ENCODE measurements at regions of chr1 and their contacts with region 1.

Region 1: DNA sequence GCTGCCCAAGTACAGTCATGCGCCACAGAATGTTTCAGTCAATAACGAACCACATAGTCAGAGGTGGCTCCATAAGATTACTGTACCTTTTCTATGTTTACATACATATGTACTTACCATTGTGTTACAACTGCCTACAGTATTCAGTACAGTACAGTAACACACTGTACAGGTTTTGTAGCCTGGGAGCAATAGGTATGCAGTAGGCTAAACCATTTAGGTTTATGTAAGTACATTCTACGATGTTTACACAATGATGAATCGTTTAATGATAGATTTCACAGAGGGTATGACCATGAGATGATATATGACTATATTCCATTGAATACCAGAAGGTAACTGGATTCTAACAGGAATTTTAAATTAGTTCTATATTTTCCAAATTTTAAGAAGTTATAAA is 10.5 kb downstream of the YY1AP1 start:
- DNase-seq: no peak
- ATAC-seq: no peak
- H3K4me3 ChIP-seq: no peak overlapping the region
- H3K27ac ChIP-seq: no peak overlapping the region
- H3K4me1 ChIP-seq: peaks cover 0 to 33% (median 19%) of the 10 kb centered on the region in 9 donors
- H3K27me3 ChIP-seq: no peaks in the 10 kb centered on the region
- CTCF ChIP-seq: no peak

Region 2: DNA sequence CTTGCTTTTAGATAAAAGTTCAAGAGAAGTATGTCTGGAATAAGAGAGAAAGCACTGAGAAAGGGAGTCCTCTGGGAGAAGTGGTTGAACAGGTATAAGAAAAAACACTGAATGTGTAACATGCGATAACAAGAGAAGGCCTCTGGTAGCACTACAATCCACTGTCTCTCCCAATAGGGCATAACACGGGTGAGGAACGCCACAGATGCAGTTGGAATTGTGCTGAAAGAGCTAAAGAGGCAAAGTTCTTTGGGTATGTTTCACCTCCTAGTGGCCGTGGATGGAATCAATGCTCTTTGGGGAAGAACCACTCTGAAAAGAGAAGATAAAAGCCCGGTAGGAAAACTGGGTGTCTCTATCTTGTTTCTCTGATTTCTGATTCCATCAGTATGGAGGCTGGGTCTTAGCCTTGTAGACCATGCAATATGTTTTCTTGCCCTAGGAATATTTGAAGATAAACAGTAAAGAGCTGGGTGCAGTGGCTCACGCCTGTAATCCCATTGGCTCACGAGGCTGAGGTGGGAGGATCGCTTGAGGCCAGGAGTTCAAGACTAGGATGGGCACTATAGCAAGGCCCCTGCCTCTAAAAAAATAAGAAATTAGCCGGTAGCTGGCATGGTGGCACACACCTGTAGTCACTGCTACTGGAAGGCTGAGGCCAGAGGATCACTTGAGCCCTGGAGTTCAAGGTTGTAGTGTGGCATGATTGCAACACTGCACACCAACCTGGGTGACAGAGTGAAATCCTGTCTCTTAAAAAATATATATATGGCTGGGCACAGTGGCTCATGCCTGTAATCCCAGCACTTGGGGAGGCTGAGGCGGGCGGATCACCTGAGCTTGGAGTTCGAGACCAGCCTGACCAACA is 51.2 kb after region 1 on chr1:
- intact Hi-C with region 1: loop called in 3 of 10 experiments (anchors 10 kb)
- DNase-seq: peak in 1 of 2 donors; percentile 43
- ATAC-seq: peak in 6 of 8 donors; percentile 50 to 64 (median 56)
- H3K4me3 ChIP-seq: no peak overlapping the region
- H3K27ac ChIP-seq: no peak overlapping the region
- H3K4me1 ChIP-seq: no peaks in the 10 kb centered on the region
- H3K27me3 ChIP-seq: no peaks in the 10 kb centered on the region
- CTCF ChIP-seq: peak; percentile 21 to 68 (median 54)

Measured in heart right ventricle (tissue), 16 donors.